Natural killer cell (primary cell): ENCODE measurements at regions of chr12 and their contacts with region 1.

Region 1: DNA sequence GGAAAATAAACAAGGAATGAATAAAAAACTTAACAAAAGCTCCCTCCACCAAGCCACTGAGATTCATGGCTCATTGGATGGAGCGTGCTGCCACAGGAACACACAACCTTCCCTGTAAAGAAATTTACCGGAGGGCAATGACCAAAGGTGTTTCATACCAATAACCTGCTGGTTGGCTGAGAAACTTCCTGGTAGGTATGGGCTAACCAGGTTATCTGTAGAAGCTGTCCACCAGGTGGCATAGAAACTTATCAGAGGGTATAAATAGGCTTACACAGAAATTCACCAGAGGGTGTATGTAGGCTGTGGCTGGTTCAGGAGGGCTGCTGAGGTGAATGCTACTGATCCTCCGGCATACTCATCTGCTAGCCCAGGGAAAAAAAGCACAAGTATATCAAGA is 27.1 kb upstream of the MTERF2 start:
- DNase-seq: peak in 1 of 2 donors; percentile 61
- ATAC-seq: peak; percentile 75 to 82 (median 79)
- H3K4me3 ChIP-seq: no peak overlapping the region
- H3K4me3 Mint-ChIP-seq: no peak overlapping the region
- H3K27ac ChIP-seq: no peak overlapping the region
- H3K27ac Mint-ChIP-seq: no peak overlapping the region
- H3K4me1 ChIP-seq: no peaks in the 10 kb centered on the region
- H3K4me1 Mint-ChIP-seq: no peaks in the 10 kb centered on the region
- H3K27me3 ChIP-seq: no peaks in the 10 kb centered on the region
- H3K27me3 Mint-ChIP-seq: no peaks in the 10 kb centered on the region
- CTCF ChIP-seq: no peak

Region 2: DNA sequence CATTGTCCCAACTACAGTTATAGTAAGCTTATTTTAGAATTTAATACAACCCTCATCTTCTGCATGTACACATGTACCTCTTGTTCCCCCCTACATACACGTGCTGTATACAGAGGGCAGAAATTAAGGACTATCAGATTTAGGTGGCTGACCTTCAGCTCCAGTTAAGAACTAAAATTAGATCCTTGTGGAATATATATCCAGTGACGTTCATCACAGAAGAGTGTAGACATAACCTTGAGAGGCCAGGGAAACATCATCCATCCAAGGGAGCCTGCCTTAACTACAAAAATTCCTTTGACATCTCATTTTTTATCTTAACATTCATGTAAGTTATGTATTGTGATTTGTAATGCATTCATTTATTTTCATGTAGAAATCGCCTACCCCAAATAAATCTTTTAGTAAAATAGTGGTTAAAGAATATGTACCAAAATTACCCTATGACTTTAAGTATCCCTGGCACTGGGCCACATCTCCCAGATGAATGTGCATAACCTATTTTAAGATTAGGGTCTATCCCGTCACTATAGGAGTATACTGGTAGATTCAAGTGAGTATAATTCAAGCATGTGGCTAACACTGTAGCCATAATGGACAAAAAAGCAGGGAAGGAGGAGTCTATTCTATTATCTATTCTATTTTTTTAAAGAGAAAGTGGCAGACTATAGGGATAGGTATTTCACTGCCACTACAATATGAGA is 212.0 kb before region 1 on chr12:
- intact Hi-C with region 1: no loop called
- DNase-seq: no peak
- ATAC-seq: no peak
- H3K4me3 ChIP-seq: no peak overlapping the region
- H3K4me3 Mint-ChIP-seq: no peak overlapping the region
- H3K27ac ChIP-seq: no peak overlapping the region
- H3K27ac Mint-ChIP-seq: no peak overlapping the region
- H3K4me1 ChIP-seq: no peaks in the 10 kb centered on the region
- H3K4me1 Mint-ChIP-seq: peaks cover 0 to 6% of the 10 kb centered on the region in 2 donors
- H3K27me3 ChIP-seq: no peaks in the 10 kb centered on the region
- H3K27me3 Mint-ChIP-seq: no peaks in the 10 kb centered on the region
- CTCF ChIP-seq: no peak

Region 3: DNA sequence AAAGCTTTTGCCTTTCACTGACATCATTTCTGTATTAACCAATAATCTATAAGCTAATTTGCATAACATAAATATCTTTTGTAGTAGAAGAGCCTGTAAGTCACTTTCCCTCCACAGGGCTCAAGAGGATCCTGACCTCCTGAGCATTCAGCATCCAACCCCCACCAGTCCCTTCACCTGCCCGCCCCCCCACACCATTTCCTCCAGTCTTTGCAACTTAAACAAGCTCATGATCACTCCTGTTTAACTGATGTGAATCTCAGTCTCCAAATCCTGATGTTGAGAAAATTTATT is 91.3 kb after region 1 on chr12:
- intact Hi-C with region 1: loop called (anchors 1 kb)
- DNase-seq: no peak
- ATAC-seq: no peak
- H3K4me3 ChIP-seq: no peak overlapping the region
- H3K4me3 Mint-ChIP-seq: no peak overlapping the region
- H3K27ac ChIP-seq: no peak overlapping the region
- H3K27ac Mint-ChIP-seq: no peak overlapping the region
- H3K4me1 ChIP-seq: no peaks in the 10 kb centered on the region
- H3K4me1 Mint-ChIP-seq: no peaks in the 10 kb centered on the region
- H3K27me3 ChIP-seq: no peaks in the 10 kb centered on the region
- H3K27me3 Mint-ChIP-seq: peaks cover 11 to 13% of the 10 kb centered on the region in 2 donors
- CTCF ChIP-seq: no peak